Activated CD8-positive, alpha-beta T cell treated with anti-CD3 and anti-CD28 coated beads for 36 hours (primary cell): ENCODE measurements at regions of chr2 and their contacts with region 1.

Region 1: GRCh38 chr2:46062637-46063412 is 234.4 kb upstream of the EPAS1 start:
- DNase-seq: peak; percentile 87
- ATAC-seq: peak; percentile 74
- H3K4me3 Mint-ChIP-seq: no peak overlapping the region
- H3K27ac Mint-ChIP-seq: no peak overlapping the region
- H3K4me1 Mint-ChIP-seq: peaks cover 9% of the 10 kb centered on the region
- H3K27me3 Mint-ChIP-seq: no peaks in the 10 kb centered on the region
- CTCF ChIP-seq: peak; percentile 74

Region 2: GRCh38 chr2:45974056-45974455 is 88.8 kb before region 1 on chr2:
- CTCF ChIA-PET with region 1: no interaction called
- POLR2A ChIA-PET with region 1: no interaction called
- intact Hi-C with region 1: no loop called
- DNase-seq: no peak
- ATAC-seq: no peak
- H3K4me3 Mint-ChIP-seq: no peak overlapping the region
- H3K27ac Mint-ChIP-seq: no peak overlapping the region
- H3K4me1 Mint-ChIP-seq: no peaks in the 10 kb centered on the region
- H3K27me3 Mint-ChIP-seq: no peaks in the 10 kb centered on the region
- CTCF ChIP-seq: no peak

Region 3: GRCh38 chr2:46010925-46011490 is 51.8 kb before region 1 on chr2:
- CTCF ChIA-PET with region 1: interaction called, 18 read pairs
- POLR2A ChIA-PET with region 1: no interaction called
- intact Hi-C with region 1: no loop called
- DNase-seq: no peak
- ATAC-seq: peak; percentile 79
- H3K4me3 Mint-ChIP-seq: no peak overlapping the region
- H3K27ac Mint-ChIP-seq: no peak overlapping the region
- H3K4me1 Mint-ChIP-seq: peaks cover 3% of the 10 kb centered on the region
- H3K27me3 Mint-ChIP-seq: no peaks in the 10 kb centered on the region
- CTCF ChIP-seq: peak; percentile 82

Region 4: DNA sequence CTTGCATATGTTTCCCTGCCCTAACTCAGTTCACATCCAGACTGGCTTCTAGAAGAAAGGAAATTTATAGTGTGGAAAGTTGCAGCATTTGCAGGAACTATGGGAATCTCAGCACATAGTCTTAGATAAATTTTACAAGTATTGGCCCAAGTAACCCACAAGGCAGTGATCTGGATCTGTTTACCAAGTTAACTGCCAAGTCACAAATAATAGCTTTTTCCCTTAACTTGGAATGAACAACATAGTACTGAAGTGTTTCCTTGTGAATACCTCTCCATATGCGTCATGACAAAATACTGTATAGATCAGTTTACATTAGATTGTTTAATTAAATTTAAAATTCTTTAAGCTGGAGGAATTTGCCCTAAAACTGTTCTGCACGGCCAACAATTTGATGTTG is 21.4 kb before region 1 on chr2:
- CTCF ChIA-PET with region 1: interaction called, 13 read pairs
- POLR2A ChIA-PET with region 1: no interaction called
- intact Hi-C with region 1: no loop called
- DNase-seq: no peak
- ATAC-seq: no peak
- H3K4me3 Mint-ChIP-seq: no peak overlapping the region
- H3K27ac Mint-ChIP-seq: no peak overlapping the region
- H3K4me1 Mint-ChIP-seq: peaks cover 6% of the 10 kb centered on the region
- H3K27me3 Mint-ChIP-seq: no peaks in the 10 kb centered on the region
- CTCF ChIP-seq: no peak

Region 5: GRCh38 chr2:46050489-46050888 is 12.3 kb before region 1 on chr2:
- CTCF ChIA-PET with region 1: interaction called, 18 read pairs
- POLR2A ChIA-PET with region 1: no interaction called
- intact Hi-C with region 1: no loop called
- DNase-seq: no peak
- ATAC-seq: no peak
- H3K4me3 Mint-ChIP-seq: no peak overlapping the region
- H3K27ac Mint-ChIP-seq: no peak overlapping the region
- H3K4me1 Mint-ChIP-seq: peaks cover 16% of the 10 kb centered on the region
- H3K27me3 Mint-ChIP-seq: no peaks in the 10 kb centered on the region
- CTCF ChIP-seq: peak; percentile 13

Region 6: DNA sequence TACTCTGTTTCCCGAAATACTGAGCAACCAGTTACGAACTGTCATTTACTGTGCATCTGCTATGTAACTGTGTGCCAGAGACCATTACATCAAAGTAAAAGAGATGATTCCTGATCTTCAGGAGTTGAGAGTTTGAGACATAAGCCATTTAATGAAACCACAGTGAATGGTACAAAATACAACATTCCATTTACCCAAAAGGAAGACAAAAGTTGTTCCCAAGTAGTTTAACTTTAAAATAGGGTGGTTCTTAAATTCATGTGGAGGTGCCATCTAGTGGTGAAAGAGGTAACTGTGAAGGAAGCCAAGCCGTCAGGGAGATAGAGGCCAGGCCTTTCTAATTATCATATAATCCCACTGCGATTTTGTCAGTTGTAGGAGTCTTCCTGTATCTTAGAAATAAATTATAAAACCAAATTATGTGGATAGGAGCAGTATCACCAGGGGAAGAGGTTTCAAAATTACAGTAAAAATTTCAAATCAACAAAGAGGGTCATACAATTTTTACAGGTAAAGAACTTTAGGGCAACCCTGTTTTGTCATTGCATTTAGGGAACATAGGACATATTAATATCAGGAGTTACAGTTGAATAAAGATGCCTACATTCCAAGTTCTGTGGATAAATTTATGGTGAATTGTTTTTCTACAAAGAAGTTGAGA is 302.1 kb after region 1 on chr2:
- CTCF ChIA-PET with region 1: interaction called, 17 read pairs
- POLR2A ChIA-PET with region 1: no interaction called
- intact Hi-C with region 1: loop called (anchors 5 kb)
- DNase-seq: peak; percentile 52
- ATAC-seq: peak; percentile 57
- H3K4me3 Mint-ChIP-seq: no peak overlapping the region
- H3K27ac Mint-ChIP-seq: no peak overlapping the region
- H3K4me1 Mint-ChIP-seq: peaks cover 29% of the 10 kb centered on the region
- H3K27me3 Mint-ChIP-seq: no peaks in the 10 kb centered on the region
- CTCF ChIP-seq: peak; percentile 91